ENCODE measurements at regions of chr11 and their contacts with region 1.

Region 1: DNA sequence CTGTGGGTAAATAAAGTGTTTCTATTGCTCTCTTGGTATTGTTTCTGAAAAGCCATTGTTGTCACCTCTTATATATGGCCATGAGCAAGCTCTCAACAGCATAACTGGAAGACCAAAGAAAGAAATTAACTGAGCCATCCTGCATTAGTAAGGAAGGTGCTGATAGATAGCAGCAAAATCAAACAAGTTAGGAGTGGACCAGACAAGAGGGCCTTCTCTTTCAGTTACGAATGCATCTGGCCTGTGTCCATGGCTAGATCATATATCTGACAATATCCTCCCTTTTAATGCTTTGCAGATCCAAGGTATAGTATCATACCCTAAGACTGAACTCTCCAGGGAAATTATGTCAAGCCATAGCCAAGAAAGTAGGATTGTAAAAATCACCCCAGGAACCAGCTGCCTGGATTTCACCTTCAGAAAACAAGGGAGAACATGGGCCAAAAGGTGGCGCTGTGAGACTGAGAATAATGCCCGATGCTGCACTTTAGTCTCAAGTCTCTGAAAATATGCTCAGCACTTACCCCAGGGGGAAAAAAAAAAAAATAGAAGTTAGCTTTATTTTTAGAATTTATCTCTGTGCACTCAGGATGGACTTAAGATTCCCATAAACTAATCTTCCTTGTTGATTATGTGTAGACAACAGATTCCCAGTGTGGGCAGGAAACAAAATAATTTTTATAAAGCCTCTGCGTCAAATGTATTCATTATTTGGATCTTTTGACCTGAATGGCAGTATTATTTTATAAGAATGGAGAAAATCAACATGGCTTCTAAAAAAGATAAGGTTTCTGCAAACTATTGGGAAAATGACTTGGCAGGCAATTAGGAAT is 415.1 kb downstream of the ETS1 start:
- DNase-seq: peak; percentile 86
- ATAC-seq: peak; percentile 70
- H3K4me3 ChIP-seq: no peak overlapping the region
- H3K4me3 Mint-ChIP-seq: no peak overlapping the region
- H3K27ac ChIP-seq: no peak overlapping the region
- H3K27ac Mint-ChIP-seq: no peak overlapping the region
- H3K4me1 ChIP-seq: peaks cover 3 to 4% of the 10 kb centered on the region in 2 donors
- H3K4me1 Mint-ChIP-seq: peaks cover 3% of the 10 kb centered on the region
- H3K27me3 ChIP-seq: peaks cover 0 to 4% (median 0%) of the 10 kb centered on the region in 4 experiments
- H3K27me3 Mint-ChIP-seq: peaks cover 10% of the 10 kb centered on the region
- CTCF ChIP-seq: peak; percentile 89

Region 2: GRCh38 chr11:128061281-128061871 is 110.9 kb before region 1 on chr11:
- CTCF ChIA-PET with region 1: no interaction called
- POLR2A ChIA-PET with region 1: no interaction called
- intact Hi-C with region 1: no loop called
- DNase-seq: no peak
- ATAC-seq: no peak
- H3K4me3 ChIP-seq: no peak overlapping the region
- H3K4me3 Mint-ChIP-seq: no peak overlapping the region
- H3K27ac ChIP-seq: no peak overlapping the region
- H3K27ac Mint-ChIP-seq: no peak overlapping the region
- H3K4me1 ChIP-seq: no peaks in the 10 kb centered on the region
- H3K4me1 Mint-ChIP-seq: no peaks in the 10 kb centered on the region
- H3K27me3 ChIP-seq: peaks cover 0 to 8% (median 4%) of the 10 kb centered on the region in 4 experiments
- H3K27me3 Mint-ChIP-seq: peaks cover 32% of the 10 kb centered on the region
- CTCF ChIP-seq: no peak

Region 3: DNA sequence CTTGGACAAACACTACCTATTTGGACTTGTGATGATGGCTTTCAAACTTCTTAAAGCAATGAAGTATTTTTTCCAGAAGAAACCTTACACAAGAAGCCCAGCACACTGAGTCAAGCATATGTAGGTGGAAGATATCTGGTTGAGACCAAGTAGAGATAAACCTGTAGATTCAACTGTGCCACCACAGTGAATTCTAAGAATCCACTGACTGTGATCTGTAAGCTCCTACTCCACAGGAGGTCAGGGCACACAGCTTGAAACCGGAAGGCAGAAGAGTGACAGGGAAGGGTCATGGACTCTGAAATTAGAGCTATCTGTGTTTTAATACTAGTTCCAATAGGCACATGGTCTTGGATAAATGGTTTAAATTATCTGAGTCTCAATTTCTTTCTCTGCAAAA is 10.6 kb after region 1 on chr11:
- CTCF ChIA-PET with region 1: interaction called, 19 read pairs
- POLR2A ChIA-PET with region 1: no interaction called
- intact Hi-C with region 1: no loop called
- DNase-seq: no peak
- ATAC-seq: no peak
- H3K4me3 ChIP-seq: no peak overlapping the region
- H3K4me3 Mint-ChIP-seq: no peak overlapping the region
- H3K27ac ChIP-seq: no peak overlapping the region
- H3K27ac Mint-ChIP-seq: no peak overlapping the region
- H3K4me1 ChIP-seq: no peaks in the 10 kb centered on the region
- H3K4me1 Mint-ChIP-seq: no peaks in the 10 kb centered on the region
- H3K27me3 ChIP-seq: no peaks in the 10 kb centered on the region
- H3K27me3 Mint-ChIP-seq: peaks cover 3% of the 10 kb centered on the region
- CTCF ChIP-seq: no peak

Region 4: DNA sequence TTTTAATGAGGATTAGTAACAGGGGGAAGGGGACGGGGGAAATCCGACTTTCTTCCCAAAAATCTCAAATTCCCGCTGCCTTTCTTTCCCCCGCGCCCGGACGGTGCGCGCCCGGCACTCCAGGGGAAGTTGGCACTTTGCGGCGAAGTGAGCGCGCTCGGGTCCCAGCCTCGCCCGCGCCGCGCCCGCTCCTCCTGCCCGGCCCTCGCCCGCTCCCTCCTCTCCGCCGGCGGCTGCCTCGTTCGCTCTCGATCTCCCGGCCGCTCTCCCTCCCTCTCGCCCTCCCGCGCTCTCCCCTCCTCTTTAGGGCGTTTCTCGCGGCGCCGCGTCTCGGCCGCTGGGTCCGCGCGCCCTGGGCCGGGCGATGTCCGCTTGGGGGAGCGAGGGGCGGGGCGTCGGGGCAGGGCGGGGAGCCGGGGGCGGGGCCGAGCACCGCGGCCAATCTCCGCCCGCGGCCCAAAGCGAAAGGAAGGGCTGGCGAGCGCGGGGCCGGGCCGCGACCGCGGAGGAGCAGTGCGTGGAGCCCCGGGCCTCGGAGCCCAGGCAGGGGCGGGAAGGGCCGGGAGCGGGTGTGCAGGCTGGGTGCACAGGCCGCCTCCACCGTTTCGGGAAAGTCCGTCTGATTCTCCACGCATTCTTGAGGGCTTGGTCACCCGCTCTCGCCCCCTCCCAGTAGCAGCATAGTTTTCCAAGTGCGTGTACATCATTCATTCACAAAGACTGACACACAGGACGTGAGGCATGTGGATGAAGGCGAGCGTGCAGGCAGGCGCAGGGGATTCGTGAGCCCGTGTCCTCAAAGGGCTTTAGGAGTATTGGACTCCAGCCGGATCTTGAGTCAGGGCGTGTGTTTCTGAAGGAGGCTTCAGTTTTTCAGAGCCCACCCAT is 350.0 kb after region 1 on chr11:
- CTCF ChIA-PET with region 1: interaction called, 11 read pairs
- POLR2A ChIA-PET with region 1: no interaction called
- intact Hi-C with region 1: no loop called
- DNase-seq: peak; percentile 92
- ATAC-seq: peak; percentile 91
- H3K4me3 ChIP-seq: peak overlapping the region; percentile 79 to 98 (median 90)
- H3K4me3 Mint-ChIP-seq: peak overlapping the region; percentile 92
- H3K27ac ChIP-seq: peak overlapping the region; percentile 82 to 90
- H3K27ac Mint-ChIP-seq: peak overlapping the region; percentile 98
- H3K4me1 ChIP-seq: peaks cover 31 to 34% of the 10 kb centered on the region in 2 donors
- H3K4me1 Mint-ChIP-seq: peaks cover 61% of the 10 kb centered on the region
- H3K27me3 ChIP-seq: no peaks in the 10 kb centered on the region
- H3K27me3 Mint-ChIP-seq: no peaks in the 10 kb centered on the region
- CTCF ChIP-seq: no peak

Region 5: DNA sequence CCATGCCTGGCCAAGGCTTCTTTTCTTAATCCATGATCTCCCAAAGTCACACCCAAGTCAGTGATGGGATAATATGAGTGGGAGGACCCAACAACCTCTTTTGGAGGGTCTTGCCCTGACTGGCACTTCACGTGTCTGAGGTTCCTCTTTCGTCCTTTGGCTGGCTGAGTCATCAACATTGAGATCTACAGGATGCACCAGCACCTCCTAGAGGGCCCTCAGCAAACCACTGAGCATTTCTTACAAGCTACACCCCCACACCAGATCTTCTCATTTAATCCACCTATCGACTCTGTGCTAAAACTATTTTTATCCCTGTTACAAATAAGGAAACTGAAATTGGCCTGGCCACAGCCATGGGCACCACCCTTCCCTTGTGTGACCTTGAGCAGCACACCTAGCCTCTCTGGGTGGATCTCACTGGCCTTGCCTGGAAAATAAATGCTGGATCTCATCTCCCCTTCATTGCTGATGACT is 585.0 kb after region 1 on chr11:
- CTCF ChIA-PET with region 1: interaction called, 35 read pairs
- POLR2A ChIA-PET with region 1: interaction called, 4 read pairs
- intact Hi-C with region 1: loop called (anchors 1 kb)
- DNase-seq: peak; percentile 90
- ATAC-seq: peak; percentile 82
- H3K4me3 ChIP-seq: peak overlapping the region in 1 of 5 experiments; percentile 25
- H3K4me3 Mint-ChIP-seq: peak overlapping the region; percentile 17
- H3K27ac ChIP-seq: peak overlapping the region; percentile 78 to 79
- H3K27ac Mint-ChIP-seq: peak overlapping the region; percentile 71
- H3K4me1 ChIP-seq: peaks cover 53 to 74% of the 10 kb centered on the region in 2 donors
- H3K4me1 Mint-ChIP-seq: peaks cover 82% of the 10 kb centered on the region
- H3K27me3 ChIP-seq: no peaks in the 10 kb centered on the region
- H3K27me3 Mint-ChIP-seq: no peaks in the 10 kb centered on the region
- CTCF ChIP-seq: peak; percentile 83

Region 6: DNA sequence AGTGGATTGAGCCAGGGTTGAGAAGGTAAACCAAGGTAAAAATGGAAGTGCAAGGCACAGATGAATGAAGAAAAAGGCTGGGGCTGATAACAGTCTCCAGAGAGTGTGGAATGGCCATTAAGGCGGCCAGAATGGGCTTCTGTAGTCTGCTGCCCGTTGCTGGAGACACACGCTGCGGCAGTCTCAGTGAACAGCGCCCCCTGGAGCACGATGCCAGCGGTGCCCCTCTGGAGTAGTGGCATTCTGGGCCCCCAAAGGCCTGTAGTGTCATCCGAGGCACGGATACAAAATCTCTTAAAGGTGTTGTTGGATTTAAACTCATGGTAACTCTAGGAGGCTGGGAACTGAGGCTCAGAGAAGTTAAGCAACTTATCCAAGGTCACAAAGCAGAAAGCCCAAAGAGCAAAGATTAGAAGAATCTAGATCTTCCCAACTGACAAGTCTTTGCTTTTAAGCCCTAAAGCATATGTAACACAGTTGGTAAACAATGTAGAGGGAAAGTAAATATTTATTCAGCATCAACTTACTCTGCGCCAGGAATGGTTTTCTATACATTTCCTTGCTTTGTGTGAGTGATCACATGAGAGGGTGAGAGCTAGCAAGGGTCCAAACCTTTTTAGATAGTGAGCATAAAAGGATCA is 676.7 kb after region 1 on chr11:
- CTCF ChIA-PET with region 1: interaction called, 31 read pairs
- POLR2A ChIA-PET with region 1: no interaction called
- intact Hi-C with region 1: no loop called
- DNase-seq: peak; percentile 77
- ATAC-seq: peak; percentile 72
- H3K4me3 ChIP-seq: no peak overlapping the region
- H3K4me3 Mint-ChIP-seq: no peak overlapping the region
- H3K27ac ChIP-seq: no peak overlapping the region
- H3K27ac Mint-ChIP-seq: peak overlapping the region; percentile 65
- H3K4me1 ChIP-seq: peaks cover 45 to 60% of the 10 kb centered on the region in 2 donors
- H3K4me1 Mint-ChIP-seq: peaks cover 52% of the 10 kb centered on the region
- H3K27me3 ChIP-seq: no peaks in the 10 kb centered on the region
- H3K27me3 Mint-ChIP-seq: no peaks in the 10 kb centered on the region
- CTCF ChIP-seq: peak; percentile 91

Region 7: GRCh38 chr11:128948589-128948988 is 776.3 kb after region 1 on chr11:
- CTCF ChIA-PET with region 1: interaction called, 93 read pairs
- POLR2A ChIA-PET with region 1: no interaction called
- intact Hi-C with region 1: no loop called
- DNase-seq: no peak
- ATAC-seq: no peak
- H3K4me3 ChIP-seq: no peak overlapping the region
- H3K4me3 Mint-ChIP-seq: no peak overlapping the region
- H3K27ac ChIP-seq: no peak overlapping the region
- H3K27ac Mint-ChIP-seq: no peak overlapping the region
- H3K4me1 ChIP-seq: no peaks in the 10 kb centered on the region
- H3K4me1 Mint-ChIP-seq: no peaks in the 10 kb centered on the region
- H3K27me3 ChIP-seq: peaks cover 0 to 25% (median 7%) of the 10 kb centered on the region in 4 experiments
- H3K27me3 Mint-ChIP-seq: peaks cover 39% of the 10 kb centered on the region
- CTCF ChIP-seq: no peak

Measured in B cell (primary cell).